AG04449 (cell line): ENCODE measurements at regions of chr2 and their contacts with region 1.

Region 1: GRCh38 chr2:231612179-231613053 is 19.8 kb downstream of the TEX44 start:
- DNase-seq: peak; percentile 71
- H3K4me3 ChIP-seq: no peak overlapping the region
- CTCF ChIP-seq: peak; percentile 87

Region 2: GRCh38 chr2:231632559-231633142 is 20.2 kb after region 1 on chr2:
- CTCF ChIA-PET with region 1: interaction called, 88 read pairs
- POLR2A ChIA-PET with region 1: no interaction called
- DNase-seq: peak; percentile 83
- H3K4me3 ChIP-seq: no peak overlapping the region
- CTCF ChIP-seq: no peak

Region 3: DNA sequence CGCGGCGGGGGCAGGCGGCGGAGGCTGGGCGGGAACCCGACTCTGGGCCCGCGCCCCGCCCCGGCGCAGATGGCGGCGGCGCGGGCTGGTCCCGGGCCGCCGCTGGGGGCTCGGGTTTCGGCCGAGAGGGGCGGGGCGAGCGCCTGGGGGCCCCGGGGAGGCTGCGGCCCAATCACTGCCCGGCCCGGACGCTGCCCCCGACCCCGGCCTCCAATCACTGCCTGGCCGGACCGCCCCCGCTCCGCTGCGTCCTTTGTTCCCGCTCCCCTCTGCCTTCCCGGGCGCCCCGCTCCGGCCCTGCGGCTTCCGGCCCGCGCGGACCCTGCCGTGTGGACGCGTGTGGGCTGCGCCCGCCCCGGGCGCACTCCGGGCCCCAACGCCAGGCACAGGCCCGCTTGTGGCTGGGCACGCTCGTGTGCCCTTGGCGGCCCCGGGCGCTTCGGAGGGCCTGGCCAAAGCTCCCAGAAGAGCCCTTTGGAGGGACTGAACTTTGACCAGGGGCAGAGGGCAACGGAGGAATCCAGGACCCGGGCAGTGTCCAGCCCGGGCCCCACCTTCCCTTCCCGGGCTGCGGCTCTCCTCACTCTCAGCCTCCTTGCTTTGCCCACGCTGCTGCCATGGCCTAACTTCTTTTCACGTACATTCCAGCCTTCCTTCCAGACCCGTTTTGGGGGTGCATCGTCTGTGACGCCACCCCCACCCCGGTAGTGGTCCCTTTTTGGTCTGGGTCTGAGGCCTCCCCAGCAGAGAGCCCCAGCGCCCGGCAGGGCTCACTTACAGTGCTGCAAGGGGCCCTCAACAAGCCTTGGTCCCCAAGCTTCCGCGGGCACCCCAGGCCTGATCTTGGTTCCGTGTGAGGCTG is 68.8 kb after region 1 on chr2:
- CTCF ChIA-PET with region 1: interaction called, 414 read pairs
- POLR2A ChIA-PET with region 1: interaction called, 3 read pairs
- DNase-seq: no peak
- H3K4me3 ChIP-seq: peak overlapping the region; percentile 55
- CTCF ChIP-seq: no peak

Region 4: GRCh38 chr2:231701456-231702373 is 89.3 kb after region 1 on chr2:
- CTCF ChIA-PET with region 1: interaction called, 16 read pairs
- POLR2A ChIA-PET with region 1: interaction called, 6 read pairs
- DNase-seq: no peak
- H3K4me3 ChIP-seq: no peak overlapping the region
- CTCF ChIP-seq: no peak